Mammary epithelial cell (primary cell): ENCODE measurements at regions of chr11 and their contacts with region 1.

Region 1: GRCh38 chr11:96342961-96343711 is at the start of gene MAML2:
- DNase-seq: peak; percentile 92
- H3K4me3 ChIP-seq: peak within 1 kb of the TSS; percentile 58 to 79 (median 77)
- H3K27ac ChIP-seq: peak within 1 kb of the TSS; percentile 79
- H3K4me1 ChIP-seq: peaks cover 39% of the 10 kb centered on the region
- H3K27me3 ChIP-seq: no peaks in the 10 kb centered on the region
- CTCF ChIP-seq: peak; percentile 86 to 96
- total RNA-seq, gene MAML2: 9.5 to 14.2 TPM

Region 2: GRCh38 chr11:95829580-95830259 is 513.4 kb before region 1 on chr11:
- CTCF ChIA-PET with region 1: interaction called, 11 read pairs
- dilution Hi-C with region 1: no loop called
- in situ Hi-C with region 1: no loop called
- intact Hi-C with region 1: no loop called
- DNase-seq: peak; percentile 21
- H3K4me3 ChIP-seq: no peak overlapping the region
- H3K27ac ChIP-seq: no peak overlapping the region
- H3K4me1 ChIP-seq: no peaks in the 10 kb centered on the region
- H3K27me3 ChIP-seq: no peaks in the 10 kb centered on the region
- CTCF ChIP-seq: no peak

Region 3: GRCh38 chr11:96012086-96012824 is 330.9 kb before region 1 on chr11:
- CTCF ChIA-PET with region 1: interaction called, 3 read pairs
- dilution Hi-C with region 1: no loop called
- in situ Hi-C with region 1: no loop called
- intact Hi-C with region 1: loop called (anchors 1 kb)
- DNase-seq: peak; percentile 81
- H3K4me3 ChIP-seq: no peak overlapping the region
- H3K27ac ChIP-seq: no peak overlapping the region
- H3K4me1 ChIP-seq: peaks cover 19% of the 10 kb centered on the region
- H3K27me3 ChIP-seq: no peaks in the 10 kb centered on the region
- CTCF ChIP-seq: peak; percentile 64 to 68

Region 4: GRCh38 chr11:96098514-96099241 is 244.5 kb before region 1 on chr11:
- CTCF ChIA-PET with region 1: interaction called, 17 read pairs
- dilution Hi-C with region 1: no loop called
- in situ Hi-C with region 1: no loop called
- intact Hi-C with region 1: no loop called
- DNase-seq: peak; percentile 89
- H3K4me3 ChIP-seq: no peak overlapping the region
- H3K27ac ChIP-seq: peak overlapping the region; percentile 90
- H3K4me1 ChIP-seq: peaks cover 61% of the 10 kb centered on the region
- H3K27me3 ChIP-seq: no peaks in the 10 kb centered on the region
- CTCF ChIP-seq: no peak

Region 5: DNA sequence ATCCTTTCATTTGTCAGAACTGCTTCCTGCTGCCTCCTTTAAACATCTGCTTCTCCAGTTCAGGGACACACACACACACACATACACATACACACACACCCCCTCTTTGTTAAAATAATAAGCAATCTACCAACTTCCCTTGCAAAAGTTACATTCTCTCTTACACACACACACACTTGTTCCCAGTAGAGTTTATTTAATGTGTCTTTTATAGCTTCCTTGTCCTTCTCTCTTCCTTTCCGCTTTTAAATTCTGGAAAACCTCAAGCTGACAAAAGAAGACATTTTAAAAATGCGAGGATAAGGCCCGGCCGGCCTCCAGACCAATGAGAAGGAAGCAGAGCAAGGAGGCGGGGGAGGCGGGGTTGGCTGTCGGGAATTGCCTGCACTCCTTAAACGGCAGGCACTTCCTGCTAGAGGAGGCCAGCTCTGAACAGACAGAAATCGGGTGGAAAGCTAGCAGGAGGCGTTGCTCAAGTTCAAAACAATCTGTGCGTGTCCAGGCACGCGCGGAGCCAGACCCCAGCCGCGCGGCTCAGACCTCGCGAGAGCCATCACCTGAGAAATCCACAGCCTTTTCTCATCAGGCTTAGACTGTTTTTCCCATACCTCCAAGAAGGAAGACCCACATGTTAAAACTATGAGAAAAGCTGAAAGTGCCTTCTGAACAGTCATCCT is 100.0 kb before region 1 on chr11:
- CTCF ChIA-PET with region 1: interaction called, 13 read pairs
- dilution Hi-C with region 1: no loop called
- in situ Hi-C with region 1: loop called in 1 of 2 experiments (anchors 5 kb)
- intact Hi-C with region 1: loop called (anchors 1 kb)
- DNase-seq: peak; percentile 92
- H3K4me3 ChIP-seq: peak overlapping the region; percentile 25 to 31 (median 30)
- H3K27ac ChIP-seq: peak overlapping the region; percentile 74
- H3K4me1 ChIP-seq: peaks cover 40% of the 10 kb centered on the region
- H3K27me3 ChIP-seq: no peaks in the 10 kb centered on the region
- CTCF ChIP-seq: no peak

Region 6: DNA sequence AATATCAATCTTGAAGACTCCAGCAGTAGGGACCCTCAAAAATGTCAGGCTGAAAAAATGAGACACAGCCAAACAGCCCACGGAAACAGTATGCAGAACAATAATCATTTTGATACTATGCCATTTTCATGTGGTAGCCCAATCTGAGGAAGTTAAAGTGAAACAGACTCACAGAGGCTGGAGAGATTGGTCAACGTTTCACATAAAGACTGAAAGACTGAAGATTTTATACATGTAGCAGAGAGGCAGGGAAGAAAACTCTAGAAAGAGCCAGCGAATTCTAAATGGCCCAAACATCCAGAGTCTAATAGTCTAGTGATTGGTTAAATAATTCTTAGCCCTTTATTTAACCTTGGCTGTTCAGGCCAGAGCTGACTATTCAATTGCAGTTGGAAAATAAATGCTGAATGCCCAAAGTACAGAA is 49.5 kb before region 1 on chr11:
- CTCF ChIA-PET with region 1: interaction called, 5 read pairs
- dilution Hi-C with region 1: loop called (anchors 5 kb)
- in situ Hi-C with region 1: no loop called
- intact Hi-C with region 1: no loop called
- DNase-seq: no peak
- H3K4me3 ChIP-seq: peak overlapping the region; percentile 5 to 18 (median 8)
- H3K27ac ChIP-seq: peak overlapping the region; percentile 36
- H3K4me1 ChIP-seq: peaks cover 10% of the 10 kb centered on the region
- H3K27me3 ChIP-seq: no peaks in the 10 kb centered on the region
- CTCF ChIP-seq: no peak

Region 7: DNA sequence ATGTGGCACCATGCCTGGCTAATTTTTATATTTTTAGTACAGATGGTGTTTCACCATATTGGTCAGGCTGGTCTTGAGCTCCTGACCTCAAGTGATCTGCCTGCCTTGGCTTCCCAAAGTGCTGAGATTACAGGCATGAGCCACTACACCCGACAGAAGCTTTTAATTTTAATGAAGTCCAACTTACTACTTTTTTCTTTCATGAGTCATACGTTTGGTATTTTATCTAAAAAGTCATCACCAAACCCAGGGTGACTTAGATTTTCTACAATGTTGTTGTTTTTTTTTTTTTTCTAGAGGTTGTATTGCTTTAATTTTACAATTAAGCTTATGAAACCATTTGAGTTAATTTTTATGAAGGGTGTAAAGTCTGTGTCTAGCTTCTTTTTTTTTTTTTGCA is 81.6 kb after region 1 on chr11:
- CTCF ChIA-PET with region 1: no interaction called
- dilution Hi-C with region 1: no loop called
- in situ Hi-C with region 1: no loop called
- intact Hi-C with region 1: loop called (anchors 1 kb)
- DNase-seq: no peak
- H3K4me3 ChIP-seq: no peak overlapping the region
- H3K27ac ChIP-seq: no peak overlapping the region
- H3K4me1 ChIP-seq: peaks cover 3% of the 10 kb centered on the region
- H3K27me3 ChIP-seq: no peaks in the 10 kb centered on the region
- CTCF ChIP-seq: no peak